ENCODE measurements at regions of chr2 and their contacts with region 1.

Region 1: GRCh38 chr2:127649684-127650040 is 3.7 kb downstream of the GPR17 start:
- DNase-seq: peak; percentile 78 to 89
- ATAC-seq: peak; percentile 73 to 91 (median 86)
- H3K4me3 ChIP-seq: no peak overlapping the region
- H3K27ac ChIP-seq: peak overlapping the region; percentile 15
- H3K4me1 ChIP-seq: peaks cover 16% of the 10 kb centered on the region
- H3K27me3 ChIP-seq: no peaks in the 10 kb centered on the region
- CTCF ChIP-seq: peak; percentile 90

Region 2: GRCh38 chr2:127526149-127527000 is 123.3 kb before region 1 on chr2 and contains the start of gene IWS1:
- intact Hi-C with region 1: loop called (anchors 10 kb)
- DNase-seq: peak; percentile 96 to 98
- ATAC-seq: peak; percentile 94 to 97 (median 94)
- H3K4me3 ChIP-seq: peak within 1 kb of the TSS; percentile 79
- H3K27ac ChIP-seq: peak within 1 kb of the TSS; percentile 92
- H3K4me1 ChIP-seq: peaks cover 15% of the 10 kb centered on the region
- H3K27me3 ChIP-seq: no peaks in the 10 kb centered on the region
- CTCF ChIP-seq: peak; percentile 36
- total RNA-seq, gene IWS1: 54.2 to 69.0 (median 62.7) TPM

Region 3: GRCh38 chr2:127591221-127591923 is 58.3 kb before region 1 on chr2:
- intact Hi-C with region 1: loop called in 1 of 2 experiments (anchors 1 kb)
- DNase-seq: peak; percentile 67 to 77
- ATAC-seq: peak; percentile 82 to 94 (median 87)
- H3K4me3 ChIP-seq: no peak overlapping the region
- H3K27ac ChIP-seq: no peak overlapping the region
- H3K4me1 ChIP-seq: no peaks in the 10 kb centered on the region
- H3K27me3 ChIP-seq: no peaks in the 10 kb centered on the region
- CTCF ChIP-seq: peak; percentile 84

Region 4: GRCh38 chr2:127695491-127696472 is 46.1 kb after region 1 on chr2:
- intact Hi-C with region 1: loop called in 1 of 2 experiments (anchors 5 kb)
- DNase-seq: peak; percentile 70 to 84
- ATAC-seq: peak; percentile 48 to 74 (median 64)
- H3K4me3 ChIP-seq: peak overlapping the region; percentile 61
- H3K27ac ChIP-seq: no peak overlapping the region
- H3K4me1 ChIP-seq: peaks cover 5% of the 10 kb centered on the region
- H3K27me3 ChIP-seq: no peaks in the 10 kb centered on the region
- CTCF ChIP-seq: peak; percentile 50

Region 5: DNA sequence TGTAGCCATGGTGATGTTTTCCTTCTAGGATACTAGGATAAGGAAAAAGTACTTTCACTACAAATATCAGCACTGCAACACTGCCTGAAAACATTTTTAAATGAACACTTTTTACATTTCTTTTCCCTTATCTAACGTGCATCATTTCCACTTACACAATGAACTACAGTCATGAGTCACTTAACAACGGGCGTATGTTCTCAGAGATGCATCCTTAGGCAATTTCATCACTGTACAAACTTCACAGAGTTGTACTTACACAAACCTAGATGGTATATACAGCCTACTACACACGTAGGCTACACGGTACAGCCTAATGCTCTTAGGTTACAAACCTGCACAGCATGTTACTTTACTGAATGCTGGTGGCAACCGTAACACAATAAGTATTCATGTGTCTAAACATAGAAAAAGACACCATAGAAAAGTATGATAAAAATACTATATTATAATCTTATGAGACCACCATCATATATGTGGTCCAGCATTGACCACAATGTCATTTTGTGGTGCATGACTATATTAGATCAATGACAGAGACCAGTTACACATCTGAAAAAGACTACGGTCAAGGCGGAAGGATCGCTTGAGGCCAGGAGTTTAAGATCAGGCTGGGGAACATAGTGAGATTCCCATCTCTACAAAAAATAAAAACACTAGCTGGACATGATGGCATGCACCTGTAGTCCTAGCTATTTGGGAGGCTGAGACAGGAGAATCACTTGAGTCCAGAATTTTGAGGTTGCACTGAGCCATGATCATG is 121.5 kb after region 1 on chr2:
- intact Hi-C with region 1: no loop called
- DNase-seq: no peak
- ATAC-seq: peak in 3 of 4 donors; percentile 40 to 69 (median 47)
- H3K4me3 ChIP-seq: no peak overlapping the region
- H3K27ac ChIP-seq: no peak overlapping the region
- H3K4me1 ChIP-seq: peaks cover 14% of the 10 kb centered on the region
- H3K27me3 ChIP-seq: no peaks in the 10 kb centered on the region
- CTCF ChIP-seq: no peak

Region 6: GRCh38 chr2:128027801-128028667 is 378.4 kb after region 1 on chr2 and contains the start of gene SAP130:
- intact Hi-C with region 1: no loop called
- DNase-seq: peak; percentile 99
- ATAC-seq: peak; percentile 92 to 94 (median 92)
- H3K4me3 ChIP-seq: peak within 1 kb of the TSS; percentile 83
- H3K27ac ChIP-seq: peak within 1 kb of the TSS; percentile 93
- H3K4me1 ChIP-seq: peaks cover 7% of the 10 kb centered on the region
- H3K27me3 ChIP-seq: no peaks in the 10 kb centered on the region
- CTCF ChIP-seq: no peak
- total RNA-seq, gene SAP130: 10.5 to 14.3 (median 13.2) TPM

Measured in psoas muscle (tissue), 8 donors.